Activated T-helper 1 cell treated with anti-CD3 and anti-CD28 coated beads, Interleukin-12 subunit alpha, Interleukin-12 subunit beta, Interleukin-2, Interleukin-4 antibody, amounts not matched to agents 30 ng/mL and 10 ng/mL and 1 ng/mL, durations not matched to agents 14 hours and 24 hours and 36 hours (primary cell): ENCODE measurements at regions of chr11 and their contacts with region 1.

Region 1: GRCh38 chr11:68003846-68004550 is at the start of gene UNC93B1:
- DNase-seq: peak; percentile 81
- H3K4me3 Mint-ChIP-seq: peak within 1 kb of the TSS; percentile 85
- H3K27ac Mint-ChIP-seq: peak within 1 kb of the TSS; percentile 82
- H3K4me1 Mint-ChIP-seq: peaks cover 27% of the 10 kb centered on the region
- H3K27me3 Mint-ChIP-seq: no peaks in the 10 kb centered on the region
- total RNA-seq, gene UNC93B1: 13.9 and 14.8 TPM in 2 replicates

Region 2: DNA sequence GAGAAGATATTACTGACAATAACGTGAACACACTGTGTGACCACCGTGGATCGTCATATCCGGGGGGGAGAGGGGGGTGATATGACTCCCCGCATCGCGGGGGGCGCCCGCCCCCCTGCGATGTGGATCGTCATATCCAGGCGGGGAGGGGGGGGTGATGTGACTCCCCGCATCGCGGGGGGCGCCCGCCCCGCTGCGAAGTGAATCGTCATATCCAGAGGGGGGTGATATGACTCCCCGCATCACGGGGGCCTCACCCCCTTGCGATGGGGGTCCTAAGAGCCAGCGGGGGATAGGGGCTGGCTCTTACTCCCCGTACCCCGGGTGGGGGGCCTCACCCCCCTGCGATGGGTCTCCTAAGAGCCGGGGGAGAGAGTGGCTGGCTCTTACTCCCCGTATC is 20.0 kb before region 1 on chr11:
- intact Hi-C with region 1: no loop called
- DNase-seq: no peak
- H3K4me3 Mint-ChIP-seq: no peak overlapping the region
- H3K27ac Mint-ChIP-seq: no peak overlapping the region
- H3K4me1 Mint-ChIP-seq: no peaks in the 10 kb centered on the region
- H3K27me3 Mint-ChIP-seq: peaks cover 5% of the 10 kb centered on the region

Region 3: DNA sequence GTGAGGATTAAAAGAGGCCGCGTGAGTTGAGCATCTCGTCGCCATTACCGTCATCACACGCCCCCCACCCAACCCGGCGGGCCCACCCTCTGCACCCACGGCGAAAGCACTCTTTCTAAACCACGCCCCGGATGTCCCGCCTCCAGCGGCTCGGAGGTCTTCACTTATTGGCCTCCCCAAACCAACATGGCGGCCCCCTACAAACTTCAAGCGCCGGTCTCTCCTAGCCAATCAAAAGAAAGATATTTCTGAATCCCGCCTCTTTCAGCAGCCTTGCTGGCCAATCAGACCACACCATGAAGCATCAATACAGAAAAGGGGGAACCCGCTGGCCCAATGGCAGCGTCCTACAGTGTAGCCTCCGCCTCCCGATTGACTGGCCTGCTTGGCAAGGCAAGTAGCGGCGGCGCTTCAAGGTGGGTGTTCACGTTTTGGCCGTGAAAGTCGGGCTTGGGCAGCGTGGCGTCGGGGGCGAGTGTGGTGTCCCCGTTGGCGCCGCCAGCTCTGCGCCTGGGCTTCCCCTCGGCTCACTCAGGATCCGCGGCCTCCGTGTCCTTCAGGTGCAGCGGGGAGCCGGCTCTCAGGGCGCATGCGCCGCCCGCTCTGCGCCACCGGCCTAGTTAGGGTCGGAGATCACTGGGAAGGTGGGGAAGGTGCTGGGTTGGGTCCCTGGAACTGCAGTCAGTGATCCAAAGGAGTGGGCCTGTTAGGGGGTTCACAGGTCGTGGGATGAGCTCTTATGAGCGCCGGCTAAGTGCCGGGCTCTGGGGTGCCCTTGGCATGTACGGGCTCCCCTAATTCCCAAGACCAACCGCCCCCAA is 26.5 kb after region 1 on chr11 and contains the start of gene NDUFS8:
- intact Hi-C with region 1: loop called (anchors 1 kb)
- DNase-seq: peak; percentile 96
- H3K4me3 Mint-ChIP-seq: peak within 1 kb of the TSS; percentile 92
- H3K27ac Mint-ChIP-seq: peak within 1 kb of the TSS; percentile 82
- H3K4me1 Mint-ChIP-seq: peaks cover 20% of the 10 kb centered on the region
- H3K27me3 Mint-ChIP-seq: peaks cover 1% of the 10 kb centered on the region
- total RNA-seq, gene NDUFS8: 137 and 144 TPM in 2 replicates

Region 4: DNA sequence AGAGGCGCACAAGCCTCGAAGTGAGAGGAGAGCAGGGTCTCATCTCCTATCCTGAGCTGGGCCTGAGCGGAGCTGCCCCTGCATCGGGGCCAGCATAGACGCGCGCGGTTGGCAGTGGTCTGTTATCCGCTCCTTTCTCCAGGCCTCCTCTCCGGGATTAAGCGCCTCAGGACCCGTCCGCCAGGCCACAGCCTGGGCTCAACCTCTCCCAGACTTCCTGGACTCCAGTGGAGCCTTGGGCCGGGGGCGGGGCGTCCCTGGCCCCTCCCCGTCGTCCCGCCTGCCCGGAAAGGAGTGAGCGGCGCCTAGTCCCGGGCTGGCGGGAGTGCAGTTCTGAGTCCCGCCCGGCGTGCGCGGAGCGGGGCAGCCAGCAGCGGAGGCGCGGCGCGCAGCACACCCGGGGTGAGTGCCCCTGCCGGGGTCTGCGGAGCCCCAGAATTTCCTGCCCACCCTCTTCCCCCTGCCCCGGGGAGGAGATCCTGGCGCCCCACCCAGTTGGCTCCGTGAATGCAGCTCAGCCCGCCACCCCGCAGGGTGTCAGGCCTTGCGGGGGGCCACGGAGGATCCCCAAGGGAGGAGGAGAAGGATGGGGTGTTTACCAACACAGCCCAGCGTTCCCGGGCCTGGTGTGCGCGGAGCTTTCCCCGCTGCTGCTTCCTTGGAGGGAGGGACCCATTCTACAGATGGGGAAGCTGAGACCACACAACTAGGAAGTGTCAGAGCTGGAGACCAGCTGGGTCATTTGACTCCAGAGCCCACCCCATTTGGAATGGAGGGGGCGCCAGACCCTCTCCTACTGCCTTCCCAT is 34.9 kb after region 1 on chr11 and contains the start of gene TCIRG1:
- intact Hi-C with region 1: loop called (anchors 1 kb)
- DNase-seq: peak; percentile 54
- H3K4me3 Mint-ChIP-seq: peak within 1 kb of the TSS; percentile 93
- H3K27ac Mint-ChIP-seq: peak within 1 kb of the TSS; percentile 94
- H3K4me1 Mint-ChIP-seq: peaks cover 11% of the 10 kb centered on the region
- H3K27me3 Mint-ChIP-seq: no peaks in the 10 kb centered on the region
- total RNA-seq, gene TCIRG1: 142 and 152 TPM in 2 replicates

Region 5: GRCh38 chr11:68160100-68160695 is 156.2 kb after region 1 on chr11:
- intact Hi-C with region 1: no loop called
- DNase-seq: no peak
- H3K4me3 Mint-ChIP-seq: no peak overlapping the region
- H3K27ac Mint-ChIP-seq: no peak overlapping the region
- H3K4me1 Mint-ChIP-seq: no peaks in the 10 kb centered on the region
- H3K27me3 Mint-ChIP-seq: no peaks in the 10 kb centered on the region

Region 6: GRCh38 chr11:68213555-68214174 is 209.7 kb after region 1 on chr11:
- intact Hi-C with region 1: loop called (anchors 2 kb)
- DNase-seq: peak; percentile 76
- H3K4me3 Mint-ChIP-seq: peak overlapping the region; percentile 64
- H3K27ac Mint-ChIP-seq: no peak overlapping the region
- H3K4me1 Mint-ChIP-seq: peaks cover 44% of the 10 kb centered on the region
- H3K27me3 Mint-ChIP-seq: peaks cover 20% of the 10 kb centered on the region